ENCODE measurements at regions of chr7 and their contacts with region 1.

Region 1: GRCh38 chr7:114085592-114086501 is 167.0 kb upstream of the PPP1R3A start:
- DNase-seq: peak; percentile 61
- ATAC-seq: peak; percentile 73
- H3K4me3 ChIP-seq: peak overlapping the region; percentile 66
- H3K27ac ChIP-seq: no peak overlapping the region
- H3K4me1 ChIP-seq: peaks cover 4% of the 10 kb centered on the region; the same call in 1 of the 2 replicates
- H3K27me3 ChIP-seq: peaks cover 52% of the 10 kb centered on the region
- CTCF ChIP-seq: no peak
- POLR2A ChIP-seq: no peak
- RAD21 ChIP-seq: no peak

Region 2: DNA sequence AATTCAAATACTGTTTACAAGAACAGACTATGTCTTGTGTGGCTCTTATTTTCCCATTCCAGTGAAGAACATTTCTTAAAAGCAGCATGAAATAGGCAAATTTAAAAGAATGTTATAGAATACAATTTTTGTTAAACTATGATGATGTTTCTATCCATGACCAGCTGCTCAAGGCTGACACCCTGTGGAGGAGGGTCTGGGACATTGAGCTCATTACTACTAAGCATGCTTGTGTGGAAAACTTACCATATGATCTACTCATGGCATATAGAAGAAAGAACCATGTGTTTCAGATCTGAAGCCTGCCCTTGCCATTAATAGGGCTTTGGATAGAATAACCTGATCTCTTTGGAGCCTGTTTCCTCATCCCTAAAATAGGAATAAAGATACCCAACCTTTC is 453.7 kb after region 1 on chr7:
- CTCF ChIA-PET with region 1: no interaction called
- POLR2A ChIA-PET with region 1: no interaction called
- dilution Hi-C with region 1: no loop called
- in situ Hi-C with region 1: no loop called
- intact Hi-C with region 1: loop called (anchors 1 kb)
- DNase-seq: peak; percentile 35
- ATAC-seq: peak; percentile 72
- H3K4me3 ChIP-seq: no peak overlapping the region
- H3K27ac ChIP-seq: no peak overlapping the region
- H3K4me1 ChIP-seq: no peaks in the 10 kb centered on the region
- H3K27me3 ChIP-seq: no peaks in the 10 kb centered on the region
- CTCF ChIP-seq: peak; percentile 51
- POLR2A ChIP-seq: no peak
- RAD21 ChIP-seq: peak; percentile 44

Region 3: DNA sequence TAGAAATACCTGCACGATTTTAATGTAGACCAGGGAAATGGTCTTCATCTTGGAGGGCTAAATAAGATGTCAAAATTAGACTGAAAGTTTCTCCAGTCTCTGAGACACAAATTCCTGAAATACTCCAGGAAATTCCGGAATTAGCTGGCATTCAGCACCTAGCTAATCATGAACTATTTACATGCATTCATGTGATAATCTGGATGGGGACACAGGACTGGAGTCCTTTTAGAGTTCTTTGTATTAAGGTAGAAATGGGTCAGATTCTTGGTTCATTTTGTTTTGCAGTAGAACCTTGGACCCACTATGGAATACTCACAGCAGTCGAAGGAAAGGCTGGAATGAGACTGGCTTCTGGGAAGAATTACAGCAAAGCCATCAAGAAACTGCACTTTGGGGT is 770.8 kb after region 1 on chr7:
- CTCF ChIA-PET with region 1: no interaction called
- POLR2A ChIA-PET with region 1: no interaction called
- dilution Hi-C with region 1: no loop called
- in situ Hi-C with region 1: no loop called
- intact Hi-C with region 1: loop called (anchors 5 kb)
- DNase-seq: peak; percentile 10
- ATAC-seq: no peak
- H3K4me3 ChIP-seq: no peak overlapping the region
- H3K27ac ChIP-seq: no peak overlapping the region
- H3K4me1 ChIP-seq: no peaks in the 10 kb centered on the region; the same call in 1 of the 2 replicates
- H3K27me3 ChIP-seq: no peaks in the 10 kb centered on the region
- CTCF ChIP-seq: no peak
- POLR2A ChIP-seq: no peak
- RAD21 ChIP-seq: no peak

Region 4: DNA sequence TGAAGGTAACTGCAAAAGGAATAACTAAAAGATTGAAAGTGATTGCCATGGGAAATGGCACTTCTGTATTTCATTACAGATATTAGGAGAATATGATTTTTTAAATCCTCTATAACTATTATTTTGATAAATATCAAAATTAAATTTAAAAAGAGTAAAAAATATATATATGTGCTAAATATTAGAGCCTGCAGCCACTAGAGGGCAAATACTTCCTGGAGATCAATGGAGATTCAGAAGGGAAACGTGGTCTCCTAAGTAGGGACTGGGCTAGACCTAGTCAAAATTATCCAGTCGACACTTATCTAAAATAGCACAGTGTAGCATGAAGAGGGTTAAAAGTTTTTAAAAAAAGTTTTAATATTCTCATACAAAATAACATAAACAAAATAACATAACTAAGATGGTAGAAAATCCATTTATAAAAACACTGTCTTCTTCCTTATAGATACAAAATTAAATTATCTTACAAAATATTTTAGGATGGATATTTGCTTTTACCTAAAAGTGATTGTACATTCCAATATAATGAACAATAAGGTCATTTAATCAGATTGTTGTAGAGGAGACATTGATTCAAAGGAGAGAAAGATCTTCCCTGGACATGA is 1270.4 kb after region 1 on chr7:
- CTCF ChIA-PET with region 1: no interaction called
- POLR2A ChIA-PET with region 1: no interaction called
- dilution Hi-C with region 1: no loop called
- in situ Hi-C with region 1: no loop called
- intact Hi-C with region 1: loop called (anchors 10 kb)
- DNase-seq: peak; percentile 44
- ATAC-seq: no peak
- H3K4me3 ChIP-seq: no peak overlapping the region
- H3K27ac ChIP-seq: no peak overlapping the region
- H3K4me1 ChIP-seq: peaks cover 4% of the 10 kb centered on the region; the same call in 1 of the 2 replicates
- H3K27me3 ChIP-seq: no peaks in the 10 kb centered on the region
- CTCF ChIP-seq: peak; percentile 48
- POLR2A ChIP-seq: no peak
- RAD21 ChIP-seq: peak; percentile 42

Region 5: DNA sequence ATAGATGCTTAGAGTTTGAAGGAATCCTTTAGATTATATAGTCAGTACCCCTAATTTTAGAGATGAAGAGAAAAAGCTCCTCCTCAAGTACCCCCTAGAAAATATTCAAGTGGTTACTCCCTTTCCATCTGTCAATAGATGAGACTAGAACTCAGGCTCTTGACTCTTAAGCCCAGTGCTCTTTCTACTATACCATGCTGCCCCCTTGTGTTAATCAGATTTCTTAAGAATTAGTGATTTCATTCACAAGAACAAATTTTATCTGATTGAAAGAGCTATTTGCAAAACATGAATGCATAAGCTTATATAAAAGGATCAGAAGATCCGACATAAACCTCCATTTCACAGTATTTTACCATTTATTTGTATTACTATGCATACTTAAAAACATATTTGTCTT is 1765.4 kb after region 1 on chr7:
- CTCF ChIA-PET with region 1: interaction called, 5 read pairs
- POLR2A ChIA-PET with region 1: no interaction called
- dilution Hi-C with region 1: no loop called
- in situ Hi-C with region 1: no loop called
- intact Hi-C with region 1: loop called (anchors 1 kb)
- DNase-seq: peak; percentile 73
- ATAC-seq: peak; percentile 59; the same call in 1 of the 2 replicates
- H3K4me3 ChIP-seq: no peak overlapping the region
- H3K27ac ChIP-seq: no peak overlapping the region
- H3K4me1 ChIP-seq: no peaks in the 10 kb centered on the region
- H3K27me3 ChIP-seq: no peaks in the 10 kb centered on the region
- CTCF ChIP-seq: peak; percentile 65
- POLR2A ChIP-seq: no peak
- RAD21 ChIP-seq: peak; percentile 79

Measured in IMR-90 (cell line).